ENCODE measurements at regions of chr1 and their contacts with region 1.

Region 1: GRCh38 chr1:6343506-6344405 is 49.8 kb downstream of the ACOT7 start:
- DNase-seq: peak; percentile 74 to 76
- ATAC-seq: peak; percentile 78 to 82 (median 79)
- H3K4me3 ChIP-seq: no peak overlapping the region
- H3K4me3 Mint-ChIP-seq: no peak overlapping the region
- H3K27ac ChIP-seq: no peak overlapping the region
- H3K27ac Mint-ChIP-seq: no peak overlapping the region
- H3K4me1 ChIP-seq: peaks cover 15% of the 10 kb centered on the region
- H3K4me1 Mint-ChIP-seq: peaks cover 11 to 23% of the 10 kb centered on the region in 2 donors
- H3K27me3 ChIP-seq: no peaks in the 10 kb centered on the region
- H3K27me3 Mint-ChIP-seq: no peaks in the 10 kb centered on the region
- CTCF ChIP-seq: peak; percentile 81

Region 2: DNA sequence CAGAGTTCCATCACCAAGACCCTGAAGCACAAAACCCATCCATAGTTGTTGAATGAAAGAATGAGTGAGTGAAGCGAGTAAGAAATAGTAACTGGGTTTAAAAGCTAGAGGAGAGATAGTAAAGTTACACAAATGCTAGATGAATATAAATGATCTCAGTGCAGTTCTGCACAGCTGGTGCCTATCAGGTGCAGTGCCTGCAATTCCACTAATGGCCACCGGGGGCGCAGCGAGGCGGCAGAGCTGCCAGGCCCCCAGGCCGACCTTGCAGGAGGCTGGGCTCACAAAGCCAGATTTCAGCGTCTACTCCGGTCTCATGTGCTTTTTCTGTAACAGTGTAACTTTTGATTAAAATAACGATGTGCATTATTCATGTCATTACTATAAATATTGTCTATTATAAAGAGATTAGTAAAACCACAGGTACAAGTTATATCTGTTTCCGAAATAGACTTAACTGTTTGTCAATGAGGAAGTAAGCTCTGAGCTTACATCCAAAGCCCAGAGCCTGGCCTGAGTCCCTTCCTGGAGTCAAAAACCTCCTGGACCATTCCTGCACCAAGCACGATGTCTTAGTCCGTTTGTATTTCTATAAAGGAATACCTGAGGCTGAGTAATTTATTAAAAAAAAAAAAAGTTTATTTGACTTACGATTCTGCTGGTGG is 829.1 kb before region 1 on chr1:
- intact Hi-C with region 1: loop called (anchors 10 kb)
- DNase-seq: peak; percentile 63 to 73
- ATAC-seq: peak; percentile 64 to 81 (median 68)
- H3K4me3 ChIP-seq: no peak overlapping the region
- H3K4me3 Mint-ChIP-seq: no peak overlapping the region
- H3K27ac ChIP-seq: no peak overlapping the region
- H3K27ac Mint-ChIP-seq: no peak overlapping the region
- H3K4me1 ChIP-seq: no peaks in the 10 kb centered on the region
- H3K4me1 Mint-ChIP-seq: no peaks in the 10 kb centered on the region
- H3K27me3 ChIP-seq: peaks cover 2% of the 10 kb centered on the region
- H3K27me3 Mint-ChIP-seq: peaks cover 7 to 15% of the 10 kb centered on the region in 2 donors
- CTCF ChIP-seq: peak; percentile 100

Region 3: DNA sequence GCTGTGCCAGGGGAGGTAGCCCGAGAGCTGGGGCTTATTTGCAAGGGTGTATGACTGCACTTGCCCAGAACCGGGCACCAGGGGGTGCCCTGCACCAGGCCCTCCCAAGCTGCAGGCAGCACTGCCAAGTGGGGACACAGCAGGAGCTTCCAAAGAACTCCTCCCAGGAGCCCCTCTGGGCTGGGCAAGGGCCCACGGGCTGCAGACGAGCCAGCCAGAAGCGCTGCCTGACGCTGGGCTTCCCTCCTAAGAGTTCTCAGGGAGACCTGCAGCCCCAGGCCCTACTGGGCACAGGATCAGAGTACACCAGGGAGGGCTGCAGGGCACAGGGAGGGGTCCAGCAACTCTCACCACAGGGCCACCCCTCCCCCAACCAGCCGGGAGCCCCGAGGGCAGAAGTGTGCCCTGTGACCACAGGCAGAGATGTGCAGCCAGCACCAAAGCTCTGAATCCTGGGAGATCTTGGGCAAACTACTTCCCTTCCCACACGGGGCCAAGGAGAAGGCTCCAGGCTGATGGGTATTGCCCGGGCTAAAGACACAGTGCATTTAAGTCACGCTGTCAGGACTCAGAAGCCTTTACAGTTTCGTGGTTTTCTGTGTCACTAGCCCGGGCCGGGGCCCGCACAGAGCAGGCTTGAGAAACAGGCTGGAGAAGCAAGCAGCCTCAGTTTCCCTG is 234.7 kb before region 1 on chr1:
- intact Hi-C with region 1: loop called (anchors 10 kb)
- DNase-seq: peak in 1 of 2 donors; percentile 56
- ATAC-seq: peak; percentile 55 to 82 (median 78)
- H3K4me3 ChIP-seq: no peak overlapping the region
- H3K4me3 Mint-ChIP-seq: no peak overlapping the region
- H3K27ac ChIP-seq: no peak overlapping the region
- H3K27ac Mint-ChIP-seq: no peak overlapping the region
- H3K4me1 ChIP-seq: no peaks in the 10 kb centered on the region
- H3K4me1 Mint-ChIP-seq: peaks cover 0 to 7% of the 10 kb centered on the region in 2 donors
- H3K27me3 ChIP-seq: no peaks in the 10 kb centered on the region
- H3K27me3 Mint-ChIP-seq: peaks cover 0 to 11% of the 10 kb centered on the region in 2 donors
- CTCF ChIP-seq: no peak

Region 4: DNA sequence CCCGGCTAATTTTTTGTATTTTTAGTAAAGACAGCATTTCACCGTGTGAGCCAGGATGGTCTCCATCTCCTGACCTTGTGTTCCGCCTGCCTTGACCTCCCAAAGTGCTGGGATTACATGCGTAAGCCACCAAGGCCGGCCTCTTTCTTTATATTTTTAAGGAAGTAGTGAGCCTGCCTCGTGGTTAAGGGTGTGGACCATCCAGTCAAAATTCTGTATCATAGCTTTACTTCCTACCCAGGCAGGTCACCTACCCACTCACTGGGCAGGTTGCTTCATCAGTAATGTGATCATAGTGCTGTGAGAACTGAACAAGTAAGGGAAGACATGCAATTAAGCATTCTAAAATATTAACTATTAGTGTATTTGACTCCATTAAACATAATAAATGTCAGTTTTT is 57.9 kb after region 1 on chr1:
- intact Hi-C with region 1: loop called (anchors 1 kb)
- DNase-seq: no peak
- ATAC-seq: no peak
- H3K4me3 ChIP-seq: no peak overlapping the region
- H3K4me3 Mint-ChIP-seq: no peak overlapping the region
- H3K27ac ChIP-seq: no peak overlapping the region
- H3K27ac Mint-ChIP-seq: no peak overlapping the region
- H3K4me1 ChIP-seq: no peaks in the 10 kb centered on the region
- H3K4me1 Mint-ChIP-seq: peaks cover 0 to 12% of the 10 kb centered on the region in 2 donors
- H3K27me3 ChIP-seq: peaks cover 4% of the 10 kb centered on the region
- H3K27me3 Mint-ChIP-seq: peaks cover 10% of the 10 kb centered on the region in 2 donors
- CTCF ChIP-seq: no peak

Region 5: GRCh38 chr1:6475381-6476133 is 131.8 kb after region 1 on chr1:
- intact Hi-C with region 1: loop called (anchors 2 kb)
- DNase-seq: peak; percentile 69 to 91
- ATAC-seq: peak; percentile 83 to 97 (median 95)
- H3K4me3 ChIP-seq: no peak overlapping the region
- H3K4me3 Mint-ChIP-seq: no peak overlapping the region
- H3K27ac ChIP-seq: no peak overlapping the region
- H3K27ac Mint-ChIP-seq: no peak overlapping the region
- H3K4me1 ChIP-seq: peaks cover 6% of the 10 kb centered on the region
- H3K4me1 Mint-ChIP-seq: peaks cover 0 to 7% of the 10 kb centered on the region in 2 donors
- H3K27me3 ChIP-seq: no peaks in the 10 kb centered on the region
- H3K27me3 Mint-ChIP-seq: peaks cover 0 to 5% of the 10 kb centered on the region in 2 donors
- CTCF ChIP-seq: peak; percentile 97